Caki2 (cell line): ENCODE measurements at regions of chr10 and their contacts with region 1.

Region 1: DNA sequence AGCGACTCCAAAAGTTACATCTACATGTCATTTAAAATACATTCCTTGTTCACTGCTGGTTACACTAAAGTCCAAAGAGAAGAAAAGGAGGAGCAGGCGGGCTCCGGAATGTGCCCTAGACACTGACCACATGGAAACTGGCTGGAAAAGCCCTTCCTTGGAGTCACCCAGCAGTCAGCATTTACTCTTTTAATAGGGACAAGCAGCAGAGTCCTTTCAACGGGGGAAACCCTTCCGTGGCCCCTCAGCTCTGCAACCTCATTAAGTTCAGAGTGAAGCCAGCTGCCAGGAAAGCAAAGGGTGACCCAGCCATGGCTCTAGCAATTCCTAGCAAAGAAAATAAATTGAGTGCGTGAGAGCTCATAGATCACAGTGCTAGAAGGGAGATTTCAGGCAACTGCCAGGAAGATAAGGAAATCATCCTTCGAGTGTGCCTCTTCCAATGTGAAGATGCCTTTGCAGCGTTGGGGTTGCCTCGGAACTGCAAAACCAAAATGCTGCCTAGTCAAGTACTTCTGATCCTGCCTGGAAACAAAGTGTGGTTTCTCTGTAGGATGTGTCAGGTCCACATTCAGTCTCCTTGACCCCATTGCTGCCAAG is 101.6 kb downstream of the SORBS1 start:
- DNase-seq: no peak

Region 2: GRCh38 chr10:95508730-95509129 is 49.2 kb after region 1 on chr10:
- in situ Hi-C with region 1: loop called (anchors 10 kb)
- DNase-seq: no peak

Region 3: DNA sequence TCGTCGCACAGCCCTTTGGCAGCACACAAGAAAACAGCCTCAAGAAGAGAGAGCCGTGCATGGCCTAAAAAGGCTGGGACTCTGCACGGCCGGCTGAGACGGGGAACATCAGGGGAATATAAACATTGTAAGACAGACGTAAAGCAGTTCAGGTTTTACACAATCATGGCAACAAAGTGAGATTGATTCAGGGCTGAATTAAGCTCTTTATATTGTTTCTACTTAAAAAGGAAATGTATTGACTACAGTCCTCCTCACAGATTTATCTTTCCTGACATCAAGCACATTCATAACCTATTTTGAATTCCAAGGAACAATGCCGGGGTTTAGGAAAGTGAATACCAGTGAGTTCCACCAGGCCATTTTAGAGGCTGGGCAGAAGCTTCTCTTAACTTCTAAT is 76.5 kb after region 1 on chr10:
- in situ Hi-C with region 1: no loop called
- DNase-seq: no peak